GM12878 (cell line): ENCODE measurements at regions of chr13 and their contacts with region 1.

Region 1: DNA sequence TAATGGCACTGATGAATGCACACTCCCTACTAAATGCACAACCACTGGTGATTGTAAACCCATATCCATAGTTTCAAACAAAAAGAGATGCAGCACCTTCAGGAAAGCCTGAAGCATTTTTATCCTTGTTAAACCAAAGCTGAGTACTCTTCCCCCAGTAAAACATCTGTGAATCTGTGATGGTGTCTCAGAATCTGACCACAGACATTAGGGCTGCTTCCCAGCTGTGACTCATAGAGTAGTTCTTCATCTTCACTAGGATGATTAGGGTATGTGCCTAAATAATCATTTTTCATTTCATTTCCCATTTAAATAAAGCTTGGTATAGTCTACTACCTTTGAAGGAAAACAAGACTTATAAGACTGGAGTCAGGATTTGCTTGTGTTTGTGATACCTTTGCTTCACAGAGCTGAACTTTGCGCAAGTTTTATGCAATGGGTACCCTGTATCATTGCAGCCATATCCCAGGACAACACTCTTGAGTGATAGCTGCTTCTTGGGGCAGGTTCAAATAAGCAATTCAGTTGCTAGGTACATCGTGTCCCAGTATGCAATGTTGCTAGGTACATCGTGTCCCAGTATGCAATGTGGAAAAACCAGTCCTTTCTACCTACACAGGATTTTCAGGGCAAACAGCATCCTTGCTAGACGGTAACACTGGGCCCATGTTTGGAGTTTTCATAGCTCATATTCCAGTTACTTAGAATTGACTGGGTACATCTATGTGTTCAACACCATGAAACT is 277.1 kb downstream of the IRS2 start:
- DNase-seq: no peak
- ATAC-seq: no peak
- H3K4me3 ChIP-seq: no peak overlapping the region
- H3K27ac ChIP-seq: no peak overlapping the region
- H3K4me1 ChIP-seq: no peaks in the 10 kb centered on the region
- H3K27me3 ChIP-seq: no peaks in the 10 kb centered on the region
- CTCF ChIP-seq: no peak
- EP300 ChIP-seq: no peak
- POLR2A ChIP-seq: no peak
- RAD21 ChIP-seq: no peak

Region 2: GRCh38 chr13:108690726-108691125 is 818.6 kb before region 1 on chr13:
- CTCF ChIA-PET with region 1: no interaction called
- POLR2A ChIA-PET with region 1: no interaction called
- RAD21 ChIA-PET with region 1: no interaction called
- SMC1A ChIA-PET with region 1: no interaction called
- in situ Hi-C with region 1: no loop called
- intact Hi-C with region 1: no loop called
- DNase-seq: no peak
- ATAC-seq: no peak
- H3K4me3 ChIP-seq: no peak overlapping the region
- H3K27ac ChIP-seq: no peak overlapping the region
- H3K4me1 ChIP-seq: no peaks in the 10 kb centered on the region
- H3K27me3 ChIP-seq: no peaks in the 10 kb centered on the region
- CTCF ChIP-seq: no peak
- EP300 ChIP-seq: no peak
- POLR2A ChIP-seq: no peak
- RAD21 ChIP-seq: no peak

Region 3: DNA sequence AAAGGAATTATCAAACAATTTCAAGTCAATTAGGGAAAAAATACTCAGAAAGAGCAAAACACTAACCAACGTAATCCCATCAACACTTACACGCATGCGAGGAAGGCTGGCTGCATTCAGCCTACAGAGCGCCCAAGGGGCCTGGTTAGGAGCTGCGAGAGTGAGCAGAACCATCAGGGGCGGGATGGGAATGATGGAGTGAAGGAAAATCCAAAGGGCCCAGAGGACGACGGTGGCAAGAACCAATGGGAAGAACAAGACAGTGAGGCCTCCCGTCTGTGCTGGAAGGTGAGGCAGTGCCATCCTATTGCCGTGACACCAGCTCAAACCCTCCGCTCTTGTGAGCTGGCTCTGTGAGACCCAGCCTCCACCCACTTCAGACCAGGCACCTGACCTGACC is 24.0 kb after region 1 on chr13:
- CTCF ChIA-PET with region 1: no interaction called
- POLR2A ChIA-PET with region 1: no interaction called
- RAD21 ChIA-PET with region 1: no interaction called
- SMC1A ChIA-PET with region 1: no interaction called
- in situ Hi-C with region 1: no loop called
- intact Hi-C with region 1: loop called (anchors 1 kb)
- DNase-seq: no peak
- ATAC-seq: no peak
- H3K4me3 ChIP-seq: no peak overlapping the region
- H3K27ac ChIP-seq: no peak overlapping the region
- H3K4me1 ChIP-seq: no peaks in the 10 kb centered on the region
- H3K27me3 ChIP-seq: no peaks in the 10 kb centered on the region
- CTCF ChIP-seq: no peak
- EP300 ChIP-seq: no peak
- POLR2A ChIP-seq: no peak
- RAD21 ChIP-seq: no peak